PC-9 (cell line): ENCODE measurements at regions of chr7 and their contacts with region 1.

Region 1: DNA sequence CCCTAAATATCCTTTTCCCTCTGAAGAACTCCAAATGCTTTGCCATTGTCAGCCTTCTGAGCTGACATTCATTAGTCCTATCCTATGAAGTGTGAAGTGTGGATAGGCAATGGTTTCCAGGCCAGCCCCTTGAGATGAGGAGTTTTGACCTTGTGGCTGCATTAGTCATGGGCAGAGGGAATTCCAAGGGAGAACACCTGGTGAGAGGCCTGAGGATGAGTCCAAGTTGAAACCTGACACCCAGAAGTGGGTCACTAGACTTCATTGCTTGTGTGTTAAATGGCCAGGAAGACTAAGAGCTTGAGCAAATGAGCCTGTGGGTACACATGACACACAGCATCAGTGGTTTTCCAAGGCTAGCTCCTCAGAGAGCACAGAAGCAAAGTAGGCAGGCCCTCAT is 260.8 kb downstream of the SKAP2 start:
- DNase-seq: peak; percentile 79 to 99
- H3K4me3 ChIP-seq: no peak overlapping the region
- H3K27ac ChIP-seq: no peak overlapping the region
- H3K4me1 ChIP-seq: peaks cover 24% of the 10 kb centered on the region
- H3K27me3 ChIP-seq: no peaks in the 10 kb centered on the region
- CTCF ChIP-seq: no peak

Region 2: GRCh38 chr7:26574476-26574875 is 29.2 kb before region 1 on chr7:
- CTCF ChIA-PET with region 1: no interaction called
- POLR2A ChIA-PET with region 1: no interaction called
- intact Hi-C with region 1: loop called (anchors 2 kb)
- DNase-seq: peak; percentile 18 to 62
- H3K4me3 ChIP-seq: no peak overlapping the region
- H3K27ac ChIP-seq: no peak overlapping the region
- H3K4me1 ChIP-seq: peaks cover 10% of the 10 kb centered on the region; the same call in 1 of the 2 replicates
- H3K27me3 ChIP-seq: no peaks in the 10 kb centered on the region
- CTCF ChIP-seq: no peak